Motor neuron (in vitro differentiated cells): ENCODE measurements at regions of chr1 and their contacts with region 1.

Region 1: DNA sequence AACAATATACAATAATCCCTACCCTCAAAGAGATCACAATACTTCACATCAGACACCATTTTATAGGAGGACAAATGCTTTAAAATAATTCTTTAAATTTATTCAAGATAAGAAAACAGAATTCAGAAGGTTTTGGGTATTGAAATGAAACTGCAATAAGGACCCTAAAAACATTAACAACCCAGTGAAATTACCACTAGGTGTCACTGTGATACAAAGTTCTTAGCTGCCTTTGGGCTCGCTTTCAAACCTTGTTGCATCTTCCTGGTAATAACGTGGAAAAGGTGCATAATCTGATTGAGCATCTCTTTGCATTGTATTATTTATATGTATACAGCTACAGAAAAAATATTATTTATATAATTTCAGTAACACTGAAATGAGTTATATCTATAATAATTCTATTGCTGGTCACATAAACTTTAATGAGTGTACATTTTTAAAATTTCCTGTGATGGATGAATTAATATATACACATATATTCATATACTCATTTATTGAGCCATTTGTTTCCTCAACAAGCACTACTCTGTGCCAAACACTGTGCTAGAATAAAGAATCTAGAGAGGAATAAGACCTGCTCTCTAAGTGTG is 185.2 kb downstream of the FAF1 start:
- ATAC-seq: peak in 7 of 8 experiments; percentile 31 to 75 (median 56)
- H3K4me3 ChIP-seq: no peak overlapping the region
- H3K27ac ChIP-seq: no peak overlapping the region
- H3K4me1 ChIP-seq: peaks cover 0 to 2% of the 10 kb centered on the region in 2 donors

Region 2: DNA sequence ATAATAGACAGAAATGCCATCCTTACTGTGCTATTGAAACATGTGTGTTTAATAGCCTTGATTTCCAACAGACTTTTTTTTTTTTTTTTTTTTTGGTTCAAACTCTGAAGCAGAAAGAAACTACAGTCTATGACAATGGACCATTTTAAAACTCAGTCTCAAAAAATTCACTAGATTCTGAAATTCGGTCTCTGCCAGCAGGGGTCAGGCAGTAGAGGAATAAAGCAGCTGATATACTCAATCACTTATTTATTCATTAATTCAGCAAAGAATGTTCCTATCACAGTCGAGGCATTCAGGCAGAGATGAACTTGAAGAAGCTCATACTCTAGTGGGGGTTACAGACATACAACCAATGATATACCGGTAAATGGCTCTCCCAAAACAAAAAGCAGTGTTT is 90.7 kb before region 1 on chr1:
- in situ Hi-C with region 1: no loop called
- ATAC-seq: no peak
- H3K4me3 ChIP-seq: no peak overlapping the region
- H3K27ac ChIP-seq: no peak overlapping the region
- H3K4me1 ChIP-seq: no peaks in the 10 kb centered on the region

Region 3: GRCh38 chr1:50917138-50918137 is 142.6 kb after region 1 on chr1:
- in situ Hi-C with region 1: loop called in 1 of 9 experiments (anchors 25 kb)
- ATAC-seq: no peak
- H3K4me3 ChIP-seq: no peak overlapping the region
- H3K27ac ChIP-seq: no peak overlapping the region
- H3K4me1 ChIP-seq: no peaks in the 10 kb centered on the region

Region 4: DNA sequence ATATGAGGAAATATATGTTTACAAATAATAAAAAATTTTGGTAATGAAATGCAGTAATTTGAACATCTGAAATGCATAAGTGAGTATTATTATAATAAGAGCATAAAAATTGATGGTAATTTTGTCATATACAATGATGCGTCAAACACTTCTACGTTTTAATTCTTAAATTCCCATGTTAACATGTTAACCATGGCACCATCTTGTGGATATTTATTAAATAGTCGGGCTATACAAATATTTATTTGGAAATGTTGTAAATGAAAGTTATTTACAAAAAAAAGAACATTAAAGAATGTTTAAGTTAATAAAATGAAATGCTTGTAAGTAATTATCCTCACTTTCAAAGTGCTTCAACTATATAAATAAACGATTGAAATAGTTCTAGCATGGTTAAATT is 270.0 kb after region 1 on chr1:
- in situ Hi-C with region 1: loop called in 2 of 9 experiments (anchors 25 kb)
- ATAC-seq: no peak
- H3K4me3 ChIP-seq: no peak overlapping the region
- H3K27ac ChIP-seq: no peak overlapping the region
- H3K4me1 ChIP-seq: no peaks in the 10 kb centered on the region

Region 5: DNA sequence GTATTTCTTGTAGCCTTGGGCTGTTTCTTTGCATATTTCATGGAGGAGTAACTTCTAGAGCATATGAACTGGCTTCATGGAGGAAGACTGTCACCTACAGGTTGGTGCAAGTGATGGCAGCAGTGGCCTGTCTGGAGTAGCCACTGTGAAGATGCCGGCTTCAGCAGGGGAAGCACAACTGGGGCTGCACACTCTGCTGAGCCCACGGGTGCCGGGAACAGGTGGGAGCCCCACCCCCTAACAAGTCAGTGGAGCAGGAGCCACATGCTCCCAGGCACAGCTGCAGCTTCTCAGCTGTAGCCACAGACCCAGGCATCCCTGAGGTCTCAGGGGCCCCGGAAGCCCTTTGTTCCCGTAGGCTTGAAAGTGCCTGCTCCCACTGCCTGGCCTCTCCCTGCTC is 284.0 kb after region 1 on chr1:
- in situ Hi-C with region 1: loop called in 1 of 9 experiments (anchors 25 kb)
- ATAC-seq: peak in 3 of 8 experiments; percentile 93 to 96 (median 96)
- H3K4me3 ChIP-seq: no peak overlapping the region
- H3K27ac ChIP-seq: no peak overlapping the region
- H3K4me1 ChIP-seq: no peaks in the 10 kb centered on the region